Activated CD4-positive, alpha-beta memory T cell treated with anti-CD3 and anti-CD28 coated beads for 36 hours (primary cell): ENCODE measurements at regions of chr1 and their contacts with region 1.

Region 1: DNA sequence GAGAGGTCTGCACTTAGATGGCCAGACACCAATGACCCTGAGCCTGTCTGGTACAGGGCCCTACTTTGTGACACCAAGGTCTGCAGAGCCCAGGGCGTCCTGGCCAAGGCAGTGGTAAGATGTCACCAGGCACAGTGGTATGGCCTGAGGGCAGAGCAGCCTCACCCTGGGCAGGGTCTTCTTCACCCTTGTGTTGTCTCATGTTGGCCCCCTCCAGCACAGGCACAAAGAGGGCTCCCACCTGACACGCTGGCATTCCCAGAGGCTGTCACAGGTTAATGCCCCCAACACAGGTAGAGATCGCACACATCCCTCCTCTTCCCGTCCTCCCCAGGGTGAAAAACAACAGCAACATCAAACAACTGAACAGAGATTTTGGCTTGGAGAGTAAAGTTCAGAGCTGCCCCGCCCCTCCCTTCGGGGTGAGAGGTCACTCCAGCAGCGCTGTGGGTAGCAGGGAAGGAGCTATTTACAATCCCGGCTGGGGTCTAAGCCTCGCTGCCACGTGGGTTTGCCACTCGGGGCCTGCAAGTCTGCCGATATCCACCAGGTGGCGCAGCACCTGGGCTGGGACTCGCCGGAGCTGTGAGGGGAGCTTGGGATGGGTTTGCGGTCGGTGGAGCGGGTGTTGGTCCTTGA is 12.6 kb downstream of the EFNA3 start:
- DNase-seq: peak; percentile 87
- H3K4me3 Mint-ChIP-seq: no peak overlapping the region
- H3K27ac Mint-ChIP-seq: no peak overlapping the region
- H3K4me1 Mint-ChIP-seq: peaks cover 3% of the 10 kb centered on the region
- H3K27me3 Mint-ChIP-seq: peaks cover 8% of the 10 kb centered on the region

Region 2: GRCh38 chr1:155034318-155035208 is 56.6 kb before region 1 on chr1:
- CTCF ChIA-PET with region 1: no interaction called
- POLR2A ChIA-PET with region 1: no interaction called
- intact Hi-C with region 1: no loop called
- DNase-seq: no peak
- H3K4me3 Mint-ChIP-seq: no peak overlapping the region
- H3K27ac Mint-ChIP-seq: no peak overlapping the region
- H3K4me1 Mint-ChIP-seq: no peaks in the 10 kb centered on the region
- H3K27me3 Mint-ChIP-seq: peaks cover 2% of the 10 kb centered on the region

Region 3: DNA sequence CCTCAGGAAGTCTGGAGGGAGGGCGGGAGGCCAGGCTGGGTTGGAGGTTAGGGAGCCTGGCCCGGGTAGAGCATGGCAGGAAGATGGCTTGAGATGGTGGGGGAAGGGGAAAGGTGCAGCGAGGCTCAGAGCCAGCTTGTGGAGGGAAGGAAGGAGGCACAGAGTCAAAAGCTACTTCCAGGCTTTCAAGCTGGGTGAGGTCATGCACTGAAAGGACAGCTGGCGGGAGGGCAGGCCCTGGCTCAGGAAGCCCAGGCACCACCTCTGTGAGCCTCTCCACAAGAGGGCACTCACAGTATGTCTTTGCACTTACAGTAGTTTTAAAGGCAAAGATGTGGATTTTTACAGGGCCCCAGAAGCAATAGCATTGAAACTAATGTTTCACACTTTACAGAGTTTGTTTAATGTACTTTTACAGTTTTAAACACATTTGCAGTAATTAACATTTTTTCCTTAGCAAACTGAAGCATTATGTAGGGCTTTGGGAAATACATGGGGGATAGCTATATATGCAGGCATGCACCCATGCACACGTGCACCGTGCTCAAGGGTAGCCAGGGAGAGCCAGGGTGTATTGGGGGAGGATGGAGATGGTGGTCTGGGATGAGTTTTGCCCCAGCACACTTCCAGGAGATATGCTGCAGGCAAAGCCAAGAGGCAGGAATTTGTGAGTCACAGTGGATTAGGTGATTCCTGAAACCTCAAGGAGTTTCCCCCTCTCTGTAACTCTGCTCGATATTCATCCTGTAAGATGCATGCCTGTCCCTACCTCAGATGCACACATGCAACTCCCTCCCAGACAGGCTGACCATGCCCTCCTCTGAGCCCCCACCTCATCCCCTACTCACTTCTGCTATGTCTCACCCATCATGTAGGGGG is 46.1 kb before region 1 on chr1:
- CTCF ChIA-PET with region 1: interaction called, 56 read pairs
- POLR2A ChIA-PET with region 1: interaction called, 3 read pairs
- intact Hi-C with region 1: no loop called
- DNase-seq: peak; percentile 76
- H3K4me3 Mint-ChIP-seq: no peak overlapping the region
- H3K27ac Mint-ChIP-seq: no peak overlapping the region
- H3K4me1 Mint-ChIP-seq: peaks cover 8% of the 10 kb centered on the region
- H3K27me3 Mint-ChIP-seq: no peaks in the 10 kb centered on the region

Region 4: DNA sequence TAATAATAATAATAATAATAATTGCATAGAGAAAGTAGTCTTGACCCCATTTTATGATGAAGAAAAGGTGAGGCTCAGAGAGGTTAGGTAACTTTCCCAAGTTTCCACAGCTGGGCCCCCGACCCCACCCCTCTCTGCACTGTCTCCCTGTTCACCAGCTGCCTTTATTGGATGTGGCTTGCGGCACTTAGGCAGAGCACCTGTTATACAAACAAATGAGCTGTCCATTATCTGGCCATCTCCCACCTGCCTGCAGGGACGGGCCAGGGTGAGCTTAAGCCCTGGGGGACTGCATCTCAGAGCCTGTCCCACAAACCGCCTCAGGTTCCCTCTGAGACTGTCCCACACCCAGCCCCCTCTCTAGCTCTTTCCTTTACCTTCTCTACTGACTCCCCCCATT is 26.4 kb after region 1 on chr1:
- CTCF ChIA-PET with region 1: interaction called, 16 read pairs
- POLR2A ChIA-PET with region 1: no interaction called
- intact Hi-C with region 1: no loop called
- DNase-seq: no peak
- H3K4me3 Mint-ChIP-seq: no peak overlapping the region
- H3K27ac Mint-ChIP-seq: no peak overlapping the region
- H3K4me1 Mint-ChIP-seq: no peaks in the 10 kb centered on the region
- H3K27me3 Mint-ChIP-seq: no peaks in the 10 kb centered on the region

Region 5: GRCh38 chr1:155135415-155136028 is 44.3 kb after region 1 on chr1 and contains the start of gene SLC50A1:
- CTCF ChIA-PET with region 1: interaction called, 19 read pairs
- POLR2A ChIA-PET with region 1: interaction called, 4 read pairs
- intact Hi-C with region 1: no loop called
- DNase-seq: peak; percentile 96
- H3K4me3 Mint-ChIP-seq: peak within 1 kb of the TSS; percentile 91
- H3K27ac Mint-ChIP-seq: peak within 1 kb of the TSS; percentile 94
- H3K4me1 Mint-ChIP-seq: peaks cover 35% of the 10 kb centered on the region
- H3K27me3 Mint-ChIP-seq: no peaks in the 10 kb centered on the region
- total RNA-seq, gene SLC50A1: 60.1 TPM

Region 6: DNA sequence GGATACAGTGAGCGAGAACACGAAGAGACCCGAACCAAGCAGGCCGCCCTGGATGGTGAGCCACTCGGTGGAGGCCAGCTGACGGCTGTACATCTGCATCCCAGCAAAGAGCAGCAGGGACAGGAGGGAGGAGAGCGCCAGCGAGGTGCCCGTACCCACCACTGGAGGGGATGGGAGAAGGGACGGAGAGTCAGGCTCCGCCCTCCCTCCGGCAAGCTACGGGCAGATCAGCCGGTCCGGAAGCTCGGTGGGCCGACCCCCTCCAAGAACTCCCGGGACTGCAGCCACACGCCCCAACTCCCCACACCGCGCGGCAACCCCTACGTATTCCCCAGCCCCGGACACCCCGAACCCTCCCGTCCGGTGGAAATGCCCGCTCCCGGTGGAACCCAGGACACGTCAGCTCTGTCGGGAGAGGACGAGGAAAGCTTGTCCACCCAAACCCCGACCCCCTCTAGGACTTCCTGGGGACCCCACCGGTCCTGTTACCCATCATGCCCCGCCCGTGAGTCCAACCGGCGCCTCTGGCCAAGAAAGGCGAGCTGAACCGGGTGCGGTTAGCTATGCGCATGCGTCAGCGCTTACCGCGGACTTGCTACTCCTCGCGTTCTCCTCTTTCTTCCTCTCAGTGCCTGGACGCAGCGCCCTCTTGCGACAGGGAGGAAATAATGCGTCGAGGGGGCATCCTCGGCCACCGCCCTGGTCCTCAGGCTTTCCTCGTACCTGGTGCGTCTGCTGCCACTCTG is 81.7 kb after region 1 on chr1 and contains the start of gene KRTCAP2:
- CTCF ChIA-PET with region 1: interaction called, 274 read pairs
- POLR2A ChIA-PET with region 1: interaction called, 7 read pairs
- intact Hi-C with region 1: no loop called
- DNase-seq: peak; percentile 98
- H3K4me3 Mint-ChIP-seq: peak within 1 kb of the TSS; percentile 93
- H3K27ac Mint-ChIP-seq: peak within 1 kb of the TSS; percentile 96
- H3K4me1 Mint-ChIP-seq: peaks cover 48% of the 10 kb centered on the region
- H3K27me3 Mint-ChIP-seq: no peaks in the 10 kb centered on the region
- total RNA-seq, gene KRTCAP2: 138 to 146 TPM

Region 7: DNA sequence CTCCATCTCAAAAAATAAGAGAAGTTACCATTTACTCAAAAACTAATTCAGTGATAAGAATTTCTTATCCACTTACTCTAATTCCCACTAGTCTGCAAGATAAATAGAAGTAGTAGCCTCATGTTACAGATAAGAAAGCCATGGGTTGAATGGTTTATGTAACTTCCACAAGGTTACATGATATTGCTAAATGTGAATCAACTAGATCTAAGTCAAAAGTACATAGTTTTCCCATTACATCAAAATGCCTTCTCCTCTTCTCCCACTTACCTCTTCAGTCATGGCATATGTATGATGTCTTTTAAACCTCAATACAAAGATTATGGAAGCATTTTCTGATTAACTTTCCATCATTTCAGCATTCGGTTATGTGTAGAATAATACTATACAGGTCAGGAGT is 362.9 kb after region 1 on chr1:
- CTCF ChIA-PET with region 1: no interaction called
- POLR2A ChIA-PET with region 1: no interaction called
- intact Hi-C with region 1: no loop called
- DNase-seq: no peak
- H3K4me3 Mint-ChIP-seq: no peak overlapping the region
- H3K27ac Mint-ChIP-seq: no peak overlapping the region
- H3K4me1 Mint-ChIP-seq: peaks cover 20% of the 10 kb centered on the region
- H3K27me3 Mint-ChIP-seq: no peaks in the 10 kb centered on the region